Esophagus squamous epithelium (tissue), 5 donors: ENCODE measurements at regions of chr2 and their contacts with region 1.

Region 1: GRCh38 chr2:203909261-203909967 is 27.1 kb upstream of the ICOS start:
- DNase-seq: no peak
- H3K4me3 ChIP-seq: peak overlapping the region in 3 of 4 donors; percentile 8 to 31 (median 11)
- H3K27ac ChIP-seq: peak overlapping the region in 1 of 4 donors; percentile 34
- H3K4me1 ChIP-seq: peaks cover 0 to 19% (median 4%) of the 10 kb centered on the region in 3 donors
- H3K27me3 ChIP-seq: no peaks in the 10 kb centered on the region
- CTCF ChIP-seq: peak; percentile 51 to 75 (median 68)
- POLR2A ChIP-seq: no peak

Region 2: GRCh38 chr2:203484266-203485112 is 424.9 kb before region 1 on chr2:
- intact Hi-C with region 1: loop called (anchors 10 kb)
- DNase-seq: no peak
- H3K4me3 ChIP-seq: no peak overlapping the region
- H3K27ac ChIP-seq: no peak overlapping the region
- H3K4me1 ChIP-seq: peaks cover 0 to 5% (median 0%) of the 10 kb centered on the region in 3 donors
- H3K27me3 ChIP-seq: no peaks in the 10 kb centered on the region
- CTCF ChIP-seq: peak in 5 of 6 experiments; percentile 45 to 75 (median 62)
- POLR2A ChIP-seq: no peak

Region 3: DNA sequence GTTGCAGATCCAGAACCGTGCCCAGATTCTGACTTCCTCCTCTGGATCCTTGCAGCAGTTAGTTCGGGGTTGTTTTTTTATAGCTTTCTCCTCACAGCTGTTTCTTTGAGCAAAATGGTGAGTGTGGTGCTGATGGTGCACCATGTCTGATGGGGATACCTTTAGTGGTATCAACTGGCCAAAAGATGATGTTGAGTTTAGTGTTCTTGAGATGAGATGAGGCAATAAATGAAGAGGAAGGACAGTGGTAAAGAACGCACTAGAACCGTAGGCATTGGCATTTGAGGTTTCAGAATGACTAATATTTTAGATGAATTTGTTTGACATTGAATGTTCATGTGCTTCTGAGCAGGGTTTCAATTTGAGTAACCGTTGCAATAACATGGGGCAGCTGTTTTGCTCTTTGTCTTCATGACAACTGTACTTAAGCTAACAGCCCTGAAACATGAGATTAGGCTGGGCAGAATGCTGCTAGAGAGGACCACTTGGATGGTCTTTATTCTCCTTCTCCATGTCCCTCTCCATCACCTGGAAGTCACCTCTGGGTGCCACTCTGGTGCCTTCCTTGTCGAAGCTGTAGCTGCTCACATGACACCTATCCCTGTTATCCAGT is 37.9 kb before region 1 on chr2:
- intact Hi-C with region 1: no loop called
- DNase-seq: no peak
- H3K4me3 ChIP-seq: peak overlapping the region in 1 of 4 donors; percentile 37
- H3K27ac ChIP-seq: peak overlapping the region in 2 of 4 donors; percentile 55 to 60
- H3K4me1 ChIP-seq: no peaks in the 10 kb centered on the region
- H3K27me3 ChIP-seq: no peaks in the 10 kb centered on the region
- CTCF ChIP-seq: no peak
- POLR2A ChIP-seq: peak in 1 of 4 donors; percentile 13

Region 4: GRCh38 chr2:203951366-203951902 is 42.0 kb after region 1 on chr2:
- intact Hi-C with region 1: no loop called
- DNase-seq: no peak
- H3K4me3 ChIP-seq: no peak overlapping the region
- H3K27ac ChIP-seq: no peak overlapping the region
- H3K4me1 ChIP-seq: no peaks in the 10 kb centered on the region
- H3K27me3 ChIP-seq: no peaks in the 10 kb centered on the region
- CTCF ChIP-seq: no peak
- POLR2A ChIP-seq: no peak